ENCODE measurements at regions of chr9 and their contacts with region 1.

Region 1: GRCh38 chr9:19754921-19755320 is 33.9 kb downstream of the SLC24A2 start:
- DNase-seq: no peak
- ATAC-seq: no peak
- H3K4me3 Mint-ChIP-seq: no peak overlapping the region
- H3K27ac Mint-ChIP-seq: no peak overlapping the region
- H3K4me1 Mint-ChIP-seq: no peaks in the 10 kb centered on the region
- H3K27me3 Mint-ChIP-seq: peaks cover 2% of the 10 kb centered on the region
- CTCF ChIP-seq: no peak

Region 2: GRCh38 chr9:19294219-19294618 is 460.7 kb before region 1 on chr9:
- CTCF ChIA-PET with region 1: no interaction called
- POLR2A ChIA-PET with region 1: no interaction called
- intact Hi-C with region 1: no loop called
- DNase-seq: no peak
- ATAC-seq: no peak
- H3K4me3 Mint-ChIP-seq: no peak overlapping the region
- H3K27ac Mint-ChIP-seq: no peak overlapping the region
- H3K4me1 Mint-ChIP-seq: peaks cover 9% of the 10 kb centered on the region
- H3K27me3 Mint-ChIP-seq: no peaks in the 10 kb centered on the region
- CTCF ChIP-seq: no peak

Region 3: GRCh38 chr9:19551124-19551929 is 203.6 kb before region 1 on chr9:
- CTCF ChIA-PET with region 1: no interaction called
- POLR2A ChIA-PET with region 1: no interaction called
- intact Hi-C with region 1: loop called (anchors 10 kb)
- DNase-seq: peak; percentile 7
- ATAC-seq: no peak
- H3K4me3 Mint-ChIP-seq: no peak overlapping the region
- H3K27ac Mint-ChIP-seq: no peak overlapping the region
- H3K4me1 Mint-ChIP-seq: no peaks in the 10 kb centered on the region
- H3K27me3 Mint-ChIP-seq: peaks cover 11% of the 10 kb centered on the region
- CTCF ChIP-seq: no peak

Region 4: DNA sequence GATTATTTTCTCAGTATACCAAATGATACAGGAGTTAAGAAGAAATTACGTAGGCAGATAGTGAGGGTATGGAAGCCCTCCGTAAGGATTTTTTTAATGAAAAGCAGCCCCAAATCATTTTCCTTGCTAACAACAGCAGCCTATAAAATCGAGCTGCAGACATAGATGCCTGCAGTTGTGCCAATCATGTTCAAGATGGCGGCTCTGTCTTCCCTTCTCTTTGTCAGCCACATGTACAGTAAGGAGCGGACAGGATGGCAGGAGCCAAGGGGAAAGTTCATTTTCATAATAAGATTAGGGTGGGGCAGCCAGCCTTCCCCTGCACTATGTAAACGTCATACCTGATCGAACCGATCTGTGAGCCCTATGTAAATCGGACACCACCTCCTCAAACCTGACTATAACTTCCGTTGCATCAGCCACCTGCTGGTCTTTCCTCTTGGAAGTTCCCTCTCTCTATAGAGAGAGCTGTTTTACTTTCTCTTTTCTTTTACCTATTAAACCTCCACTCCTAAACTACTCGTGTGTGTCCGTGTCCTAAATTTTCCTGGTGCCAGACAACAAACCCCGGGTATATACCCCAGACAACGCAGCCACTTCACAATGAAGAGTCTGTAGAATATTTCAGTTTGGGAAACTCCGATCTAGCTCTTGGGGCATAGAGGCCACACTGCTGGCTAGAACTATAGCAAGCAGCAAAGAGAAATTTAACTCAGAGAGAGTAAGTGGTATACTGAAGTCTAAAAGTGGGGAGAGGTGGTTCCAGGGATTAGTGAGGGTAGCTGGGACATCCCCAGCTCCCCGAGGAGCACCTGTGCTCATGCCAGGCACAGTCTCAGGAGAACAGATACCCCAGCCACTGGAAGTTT is 54.7 kb after region 1 on chr9:
- CTCF ChIA-PET with region 1: no interaction called
- POLR2A ChIA-PET with region 1: no interaction called
- intact Hi-C with region 1: loop called (anchors 10 kb)
- DNase-seq: no peak
- ATAC-seq: no peak
- H3K4me3 Mint-ChIP-seq: no peak overlapping the region
- H3K27ac Mint-ChIP-seq: no peak overlapping the region
- H3K4me1 Mint-ChIP-seq: no peaks in the 10 kb centered on the region
- H3K27me3 Mint-ChIP-seq: peaks cover 13% of the 10 kb centered on the region
- CTCF ChIP-seq: no peak